ENCODE measurements at regions of chr12 and their contacts with region 1.

Region 1: GRCh38 chr12:114933428-114934168 is 249.6 kb upstream of the TBX3 start:
- DNase-seq: peak; percentile 90 to 94
- ATAC-seq: peak; percentile 99 to 100
- H3K4me3 ChIP-seq: no peak overlapping the region
- H3K27ac ChIP-seq: peak overlapping the region; percentile 73 to 93
- H3K4me1 ChIP-seq: peaks cover 25% of the 10 kb centered on the region
- CTCF ChIP-seq: no peak
- EP300 ChIP-seq: peak; percentile 85 to 88; a peak in 4 of 5 replicates
- POLR2A ChIP-seq: no peak
- RAD21 ChIP-seq: peak; percentile 36 to 60

Region 2: GRCh38 chr12:114913871-114914801 is 19.5 kb before region 1 on chr12:
- CTCF ChIA-PET with region 1: interaction called, 24 read pairs
- POLR2A ChIA-PET with region 1: interaction called, 15 read pairs
- DNase-seq: peak; percentile 44 to 82
- ATAC-seq: peak; percentile 11 to 45; a peak in 3 of 6 replicates
- H3K4me3 ChIP-seq: no peak overlapping the region
- H3K27ac ChIP-seq: peak overlapping the region; percentile 77 to 86
- H3K4me1 ChIP-seq: peaks cover 58% of the 10 kb centered on the region
- CTCF ChIP-seq: no peak
- EP300 ChIP-seq: peak in 1 of 2 experiments; percentile 53; a peak in 3 of 5 replicates
- POLR2A ChIP-seq: no peak
- RAD21 ChIP-seq: peak; percentile 14 to 31; a peak in 2 of 5 replicates

Measured in A549 (cell line).